AG04450 (cell line): ENCODE measurements at regions of chr11 and their contacts with region 1.

Region 1: DNA sequence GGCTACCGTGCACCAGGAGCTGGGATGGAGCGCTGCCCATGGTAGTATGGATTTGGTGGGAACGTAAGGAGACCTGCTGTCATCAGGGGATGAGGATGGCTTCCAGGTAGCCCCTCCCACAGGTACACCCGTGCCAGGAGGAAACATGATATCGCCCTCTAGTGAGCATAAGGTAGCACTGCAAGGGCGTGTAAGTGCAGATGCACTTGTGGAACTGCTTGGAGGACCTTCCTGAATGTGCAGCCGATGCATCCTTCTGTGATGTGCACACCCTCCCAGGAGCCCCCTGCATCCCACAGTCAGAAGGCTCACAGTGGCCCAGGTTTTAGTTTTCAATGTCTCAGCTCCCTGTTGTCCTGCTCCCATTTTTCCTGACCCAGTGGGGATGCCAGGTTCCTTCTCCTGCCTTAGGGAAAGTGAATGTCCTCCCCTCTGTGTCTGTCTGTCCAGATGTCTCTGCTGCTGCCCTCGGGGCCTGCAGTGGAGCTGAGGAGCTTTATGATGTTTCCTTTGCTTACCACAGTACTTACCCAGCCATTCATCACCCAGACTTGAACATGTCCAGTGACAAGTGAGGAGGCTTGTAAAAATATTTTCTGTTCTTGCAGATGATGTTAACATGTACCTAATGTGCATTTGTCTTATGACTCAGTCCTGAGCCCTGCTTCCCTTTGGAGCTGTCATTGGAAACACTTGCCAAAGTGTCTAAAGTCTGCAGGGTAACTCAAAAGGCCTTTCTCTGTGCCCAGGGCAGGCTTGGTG is 49.2 kb downstream of the DBX1 start:
- DNase-seq: no peak
- H3K4me3 ChIP-seq: no peak overlapping the region
- H3K27ac ChIP-seq: peak overlapping the region; percentile 97
- H3K27me3 ChIP-seq: no peaks in the 10 kb centered on the region
- CTCF ChIP-seq: peak; percentile 88

Region 2: DNA sequence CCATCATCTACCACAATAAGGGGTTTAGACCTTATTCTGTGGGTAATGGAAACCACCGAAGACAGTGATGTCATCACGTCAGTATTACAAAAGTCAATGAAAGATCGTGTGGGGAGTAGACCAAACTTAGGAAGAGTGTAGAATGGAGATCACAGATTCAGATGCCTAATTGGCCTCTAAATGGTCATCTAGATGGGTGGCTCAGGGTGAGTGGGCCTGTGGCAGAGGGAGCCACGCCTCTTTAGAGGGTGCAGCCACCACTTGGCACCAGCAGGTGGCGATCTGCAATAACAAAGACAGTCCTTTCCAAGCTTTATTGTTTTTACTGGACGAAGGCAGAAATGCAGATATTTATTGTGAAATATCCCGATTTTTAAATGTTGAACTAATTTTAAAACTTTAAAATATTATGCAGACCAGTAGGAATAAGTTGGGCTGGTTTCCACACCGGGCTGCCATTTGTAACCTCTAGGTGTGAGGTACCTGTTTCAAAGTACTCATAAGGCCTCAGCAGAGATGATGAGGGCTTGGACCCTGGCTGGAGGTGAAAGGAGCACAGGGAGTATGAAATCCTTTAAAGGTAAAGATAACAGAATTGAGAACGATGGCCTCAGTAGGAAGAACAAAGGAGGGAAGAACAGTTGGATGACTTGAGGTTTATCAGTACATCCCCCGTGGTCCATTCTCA is 172.8 kb before region 1 on chr11:
- CTCF ChIA-PET with region 1: interaction called, 12 read pairs
- POLR2A ChIA-PET with region 1: no interaction called
- DNase-seq: no peak
- H3K4me3 ChIP-seq: no peak overlapping the region
- H3K27ac ChIP-seq: no peak overlapping the region
- H3K27me3 ChIP-seq: no peaks in the 10 kb centered on the region
- CTCF ChIP-seq: peak; percentile 78

Region 3: DNA sequence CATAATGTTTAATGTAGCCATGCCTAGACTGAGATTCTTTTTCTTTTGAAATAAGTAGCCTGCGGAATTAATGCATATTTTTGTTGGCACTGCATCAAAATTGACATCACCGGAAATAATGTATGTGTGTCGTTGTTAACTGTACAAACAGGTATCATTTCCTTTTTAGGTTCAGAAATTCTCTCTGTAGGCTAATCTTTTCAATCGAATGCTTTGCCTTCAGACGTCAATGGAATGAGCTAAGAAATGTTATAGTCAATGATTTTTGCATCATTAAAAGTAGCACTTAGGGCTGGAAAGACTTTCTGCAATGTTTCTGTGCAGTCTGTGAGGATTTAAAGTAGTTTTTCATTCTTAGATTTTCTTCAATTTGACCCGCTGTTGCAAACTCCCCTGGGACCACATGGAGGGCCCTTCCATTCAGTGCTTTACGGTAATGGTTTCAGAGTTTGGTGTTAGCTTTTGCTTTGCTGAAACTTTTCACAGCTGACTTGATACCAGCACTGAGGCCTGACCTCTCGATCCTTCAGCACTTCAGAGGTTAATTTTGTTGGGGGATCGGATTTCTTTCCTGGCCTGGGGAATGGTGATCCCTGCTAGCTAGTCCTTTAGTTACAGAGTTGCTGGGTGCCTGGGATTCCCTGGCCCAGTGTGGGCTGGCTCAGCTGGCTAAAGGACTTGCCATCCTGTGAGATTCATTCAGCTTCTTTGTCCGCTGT is 88.6 kb before region 1 on chr11:
- CTCF ChIA-PET with region 1: interaction called, 13 read pairs
- POLR2A ChIA-PET with region 1: no interaction called
- DNase-seq: no peak
- H3K4me3 ChIP-seq: peak overlapping the region; percentile 39
- H3K27ac ChIP-seq: peak overlapping the region; percentile 43
- H3K27me3 ChIP-seq: no peaks in the 10 kb centered on the region
- CTCF ChIP-seq: no peak

Region 4: GRCh38 chr11:20097319-20098221 is 13.5 kb before region 1 on chr11:
- CTCF ChIA-PET with region 1: interaction called, 41 read pairs
- POLR2A ChIA-PET with region 1: interaction called, 5 read pairs
- DNase-seq: no peak
- H3K4me3 ChIP-seq: no peak overlapping the region
- H3K27ac ChIP-seq: peak overlapping the region; percentile 60
- H3K27me3 ChIP-seq: no peaks in the 10 kb centered on the region
- CTCF ChIP-seq: no peak